Activated T-helper 1 cell treated with anti-CD3 and anti-CD28 coated beads, Interleukin-12 subunit alpha, Interleukin-12 subunit beta, Interleukin-2, Interleukin-4 antibody, amounts not matched to agents 30 ng/mL and 10 ng/mL and 1 ng/mL, durations not matched to agents 14 hours and 24 hours and 36 hours (primary cell): ENCODE measurements at regions of chr4 and their contacts with region 1.

Region 1: DNA sequence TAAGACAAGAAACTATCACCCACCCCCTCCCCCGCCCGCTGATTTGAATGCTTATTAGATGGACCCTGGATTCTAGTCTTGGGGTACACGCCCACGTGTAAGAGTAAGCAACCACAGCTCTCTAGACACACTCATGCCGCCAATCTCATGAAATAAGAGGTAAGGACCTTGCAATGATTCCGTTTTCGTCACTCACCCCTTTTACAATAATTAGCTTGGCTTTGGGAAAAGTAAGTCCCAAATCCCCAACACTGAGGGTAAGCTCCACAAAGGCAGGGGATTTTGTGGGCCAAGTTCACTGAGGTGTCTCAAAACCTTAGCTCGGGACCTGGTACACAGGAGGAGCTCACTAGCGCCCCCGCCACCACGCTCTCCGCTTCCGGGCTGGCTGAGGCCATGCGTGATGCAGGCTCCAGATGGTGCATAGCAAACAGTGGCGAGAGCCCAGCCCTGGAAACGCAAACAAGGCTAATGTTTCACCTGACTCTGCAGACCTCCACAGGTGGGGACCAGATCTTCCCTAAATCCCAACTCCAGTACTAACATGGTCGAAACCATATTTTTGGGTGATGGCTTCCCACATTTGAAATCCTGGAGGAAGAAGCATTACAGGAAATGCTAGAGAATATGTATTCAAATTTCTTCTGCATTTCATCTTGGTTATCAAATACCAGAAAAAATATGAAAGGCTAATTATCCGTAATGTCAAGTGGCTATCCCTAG is 4.1 kb downstream of the PLAC8 start:
- DNase-seq: peak; percentile 86
- H3K4me3 Mint-ChIP-seq: peak overlapping the region; percentile 89
- H3K27ac Mint-ChIP-seq: peak overlapping the region; percentile 93
- H3K4me1 Mint-ChIP-seq: peaks cover 58% of the 10 kb centered on the region
- H3K27me3 Mint-ChIP-seq: no peaks in the 10 kb centered on the region

Region 2: GRCh38 chr4:82373816-82374625 is 736.4 kb before region 1 on chr4 and contains the start of gene HNRNPD:
- intact Hi-C with region 1: loop called (anchors 5 kb)
- DNase-seq: peak; percentile 92
- H3K4me3 Mint-ChIP-seq: peak within 1 kb of the TSS; percentile 99
- H3K27ac Mint-ChIP-seq: peak within 1 kb of the TSS; percentile 100
- H3K4me1 Mint-ChIP-seq: peaks cover 37% of the 10 kb centered on the region
- H3K27me3 Mint-ChIP-seq: peaks cover 2% of the 10 kb centered on the region
- total RNA-seq, gene HNRNPD: 434 and 438 TPM in 2 replicates

Region 3: GRCh38 chr4:82900331-82901128 is 209.9 kb before region 1 on chr4 and contains the start of gene THAP9:
- intact Hi-C with region 1: loop called (anchors 5 kb)
- DNase-seq: peak; percentile 98
- H3K4me3 Mint-ChIP-seq: no peak within 1 kb of the TSS
- H3K27ac Mint-ChIP-seq: no peak within 1 kb of the TSS
- H3K4me1 Mint-ChIP-seq: peaks cover 27% of the 10 kb centered on the region
- H3K27me3 Mint-ChIP-seq: peaks cover 2% of the 10 kb centered on the region
- total RNA-seq, gene THAP9: 1.9 and 2.3 TPM in 2 replicates

Region 4: GRCh38 chr4:82913305-82913704 is 197.1 kb before region 1 on chr4:
- intact Hi-C with region 1: no loop called
- DNase-seq: no peak
- H3K4me3 Mint-ChIP-seq: no peak overlapping the region
- H3K27ac Mint-ChIP-seq: no peak overlapping the region
- H3K4me1 Mint-ChIP-seq: no peaks in the 10 kb centered on the region
- H3K27me3 Mint-ChIP-seq: peaks cover 2% of the 10 kb centered on the region

Region 5: DNA sequence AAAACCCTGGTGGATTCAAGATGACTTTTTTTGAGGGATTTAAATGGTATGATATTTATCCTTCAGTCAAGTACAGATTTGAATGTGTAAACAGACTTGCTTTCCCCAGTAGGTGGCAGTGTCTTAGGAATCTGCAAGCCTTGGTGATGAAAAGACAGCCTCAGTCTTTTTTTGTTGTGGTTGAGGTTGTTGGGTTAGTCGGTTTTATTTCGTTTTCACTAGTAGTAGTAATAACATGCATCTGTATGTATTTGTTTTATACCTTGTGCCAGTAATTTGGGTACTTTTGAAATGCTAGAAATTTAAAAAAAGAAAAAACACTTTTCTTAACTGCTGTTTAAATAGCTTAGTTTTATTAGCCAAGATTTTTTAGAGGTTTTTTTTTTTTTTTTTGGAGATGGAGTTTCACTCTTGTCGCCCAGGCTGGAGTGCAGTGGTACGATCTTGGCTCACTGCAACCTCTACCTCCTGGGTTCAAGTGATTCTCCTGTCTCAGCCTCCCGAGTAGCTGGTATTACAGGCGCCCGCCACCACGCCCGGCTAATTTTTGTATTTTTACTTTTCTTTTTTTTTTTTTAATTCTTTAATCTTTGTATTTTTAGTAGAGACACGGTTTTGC is 36.2 kb before region 1 on chr4:
- intact Hi-C with region 1: loop called (anchors 1 kb)
- DNase-seq: peak; percentile 66
- H3K4me3 Mint-ChIP-seq: no peak overlapping the region
- H3K27ac Mint-ChIP-seq: peak overlapping the region; percentile 19
- H3K4me1 Mint-ChIP-seq: peaks cover 29% of the 10 kb centered on the region
- H3K27me3 Mint-ChIP-seq: no peaks in the 10 kb centered on the region

Region 6: DNA sequence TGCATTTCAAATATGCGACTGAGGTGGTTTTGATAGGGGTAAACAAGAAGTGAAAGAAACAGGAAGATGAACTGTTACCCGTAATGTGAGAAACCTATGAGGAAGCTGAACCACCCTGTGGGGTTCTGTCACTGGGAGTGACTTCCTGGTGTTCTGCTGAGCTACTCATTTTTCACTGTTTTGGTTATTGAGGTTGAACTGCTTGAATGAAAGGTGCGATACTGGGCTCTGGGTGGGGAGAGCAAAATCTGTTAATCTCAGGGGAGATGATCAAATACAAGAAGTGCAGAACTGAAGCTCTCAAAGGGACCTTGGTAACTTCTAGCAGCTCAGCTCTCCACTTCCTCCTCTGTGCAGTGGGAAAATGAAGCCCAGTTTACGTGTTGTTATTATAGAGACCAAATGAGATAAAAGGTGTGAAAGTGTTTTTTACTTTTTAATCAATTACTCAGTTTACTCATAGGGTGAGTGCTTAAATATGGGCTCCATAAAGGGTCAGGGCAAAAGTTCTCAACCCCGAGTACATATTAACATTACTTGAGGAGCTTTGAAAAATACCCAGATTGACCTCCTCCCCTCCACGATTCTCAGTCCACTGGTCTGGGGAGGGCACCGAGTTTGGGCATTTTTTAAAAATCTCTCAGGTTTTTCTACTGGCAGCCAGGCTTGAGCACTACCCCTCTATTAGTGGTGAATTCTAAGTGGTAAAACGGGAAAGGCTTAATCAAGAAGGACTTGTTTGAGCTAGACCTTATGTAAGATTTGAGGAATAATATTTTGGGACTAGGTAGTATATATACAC is 107.5 kb after region 1 on chr4:
- intact Hi-C with region 1: loop called (anchors 1 kb)
- DNase-seq: peak; percentile 73
- H3K4me3 Mint-ChIP-seq: peak overlapping the region; percentile 66
- H3K27ac Mint-ChIP-seq: peak overlapping the region; percentile 91
- H3K4me1 Mint-ChIP-seq: peaks cover 81% of the 10 kb centered on the region
- H3K27me3 Mint-ChIP-seq: peaks cover 2% of the 10 kb centered on the region

Region 7: DNA sequence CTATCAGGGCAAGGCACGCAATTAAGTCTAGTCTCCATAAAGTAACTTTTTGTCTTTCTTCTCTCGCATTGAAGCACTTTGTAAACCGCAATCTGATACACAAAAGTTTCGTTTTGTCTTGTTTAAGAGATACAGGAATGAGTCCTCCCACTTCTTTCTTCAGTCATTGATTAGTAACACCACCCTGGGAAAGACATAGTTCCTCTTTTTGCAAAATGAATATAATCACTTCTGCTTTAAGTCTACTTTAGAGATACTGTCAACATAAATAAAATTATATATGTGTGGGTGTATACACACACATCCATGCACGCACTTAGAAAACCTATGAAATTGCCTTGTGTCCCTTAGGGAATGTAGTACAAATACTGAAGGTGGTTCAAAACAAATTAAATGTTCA is 162.5 kb after region 1 on chr4:
- intact Hi-C with region 1: no loop called
- DNase-seq: no peak
- H3K4me3 Mint-ChIP-seq: no peak overlapping the region
- H3K27ac Mint-ChIP-seq: no peak overlapping the region
- H3K4me1 Mint-ChIP-seq: peaks cover 25% of the 10 kb centered on the region
- H3K27me3 Mint-ChIP-seq: peaks cover 2% of the 10 kb centered on the region

Region 8: GRCh38 chr4:83284193-83285054 is 174.0 kb after region 1 on chr4 and contains the start of gene COQ2:
- intact Hi-C with region 1: loop called (anchors 1 kb)
- DNase-seq: peak; percentile 93
- H3K4me3 Mint-ChIP-seq: peak within 1 kb of the TSS; percentile 97
- H3K27ac Mint-ChIP-seq: peak within 1 kb of the TSS; percentile 99
- H3K4me1 Mint-ChIP-seq: peaks cover 48% of the 10 kb centered on the region
- H3K27me3 Mint-ChIP-seq: no peaks in the 10 kb centered on the region
- total RNA-seq, gene COQ2: 22.5 and 22.6 TPM in 2 replicates

Region 9: GRCh38 chr4:83548151-83548905 is 437.9 kb after region 1 on chr4:
- intact Hi-C with region 1: loop called (anchors 5 kb)
- DNase-seq: peak; percentile 50
- H3K4me3 Mint-ChIP-seq: no peak overlapping the region
- H3K27ac Mint-ChIP-seq: peak overlapping the region; percentile 31
- H3K4me1 Mint-ChIP-seq: peaks cover 31% of the 10 kb centered on the region
- H3K27me3 Mint-ChIP-seq: no peaks in the 10 kb centered on the region